AG04449 (cell line): ENCODE measurements at regions of chr7 and their contacts with region 1.

Region 1: GRCh38 chr7:34165929-34166550 is 260.7 kb downstream of the BMPER start:
- DNase-seq: no peak
- H3K4me3 ChIP-seq: no peak overlapping the region
- CTCF ChIP-seq: peak; percentile 65

Region 2: DNA sequence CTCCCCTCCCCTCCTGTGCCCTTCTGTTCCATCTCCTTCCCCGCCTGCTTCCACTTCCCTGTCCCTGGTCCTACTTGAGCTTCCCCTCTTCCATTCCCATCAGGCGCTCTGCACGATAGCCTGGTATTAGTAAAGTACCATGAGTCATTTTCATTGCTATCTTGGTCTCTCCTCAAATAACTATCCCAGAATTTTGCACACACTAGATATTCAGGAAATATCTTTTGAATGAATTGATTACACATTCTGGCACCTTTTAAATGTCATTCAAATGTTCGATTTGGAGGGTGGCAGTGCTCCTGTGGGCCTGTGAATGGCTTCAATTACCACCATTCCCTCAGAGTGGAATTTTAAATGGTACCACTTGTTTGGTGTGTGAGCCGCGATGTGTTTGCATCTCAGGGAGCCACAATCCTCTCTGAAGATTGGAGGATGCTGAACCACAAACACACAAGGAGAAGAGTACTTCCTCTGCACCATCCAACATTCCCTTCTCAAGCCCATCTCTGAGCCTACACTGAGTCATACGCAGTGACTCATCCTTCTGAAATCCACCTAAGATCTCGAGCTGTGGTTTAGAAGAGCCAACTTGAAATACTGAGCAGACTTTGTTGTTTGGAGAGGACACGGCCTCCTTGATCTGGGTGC is 179.0 kb before region 1 on chr7:
- CTCF ChIA-PET with region 1: interaction called, 20 read pairs
- POLR2A ChIA-PET with region 1: no interaction called
- DNase-seq: peak; percentile 96
- H3K4me3 ChIP-seq: no peak overlapping the region
- CTCF ChIP-seq: no peak

Region 3: GRCh38 chr7:34133983-34134782 is 31.9 kb before region 1 on chr7:
- CTCF ChIA-PET with region 1: interaction called, 104 read pairs
- POLR2A ChIA-PET with region 1: no interaction called
- DNase-seq: no peak
- H3K4me3 ChIP-seq: no peak overlapping the region
- CTCF ChIP-seq: peak; percentile 76

Region 4: DNA sequence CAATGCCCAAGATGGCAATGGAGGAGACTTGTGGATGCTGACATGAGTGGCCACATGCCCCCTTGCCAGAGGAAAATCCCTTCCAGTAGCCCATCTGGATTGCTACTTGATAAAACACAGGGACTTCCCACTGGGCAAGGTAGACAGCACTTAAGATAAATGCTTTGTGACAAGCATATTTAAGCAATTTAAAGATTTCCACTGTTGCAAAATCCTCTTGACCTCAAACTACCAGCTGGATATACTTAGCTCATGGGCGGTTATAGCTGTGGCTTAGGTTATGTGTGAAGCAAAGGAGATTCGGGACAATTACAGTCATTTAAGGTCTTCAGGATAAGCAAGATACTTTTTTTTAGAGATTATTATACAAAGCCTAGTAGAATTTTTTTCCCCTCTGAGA is 22.6 kb before region 1 on chr7:
- CTCF ChIA-PET with region 1: interaction called, 13 read pairs
- POLR2A ChIA-PET with region 1: no interaction called
- DNase-seq: peak; percentile 75
- H3K4me3 ChIP-seq: no peak overlapping the region
- CTCF ChIP-seq: no peak

Region 5: DNA sequence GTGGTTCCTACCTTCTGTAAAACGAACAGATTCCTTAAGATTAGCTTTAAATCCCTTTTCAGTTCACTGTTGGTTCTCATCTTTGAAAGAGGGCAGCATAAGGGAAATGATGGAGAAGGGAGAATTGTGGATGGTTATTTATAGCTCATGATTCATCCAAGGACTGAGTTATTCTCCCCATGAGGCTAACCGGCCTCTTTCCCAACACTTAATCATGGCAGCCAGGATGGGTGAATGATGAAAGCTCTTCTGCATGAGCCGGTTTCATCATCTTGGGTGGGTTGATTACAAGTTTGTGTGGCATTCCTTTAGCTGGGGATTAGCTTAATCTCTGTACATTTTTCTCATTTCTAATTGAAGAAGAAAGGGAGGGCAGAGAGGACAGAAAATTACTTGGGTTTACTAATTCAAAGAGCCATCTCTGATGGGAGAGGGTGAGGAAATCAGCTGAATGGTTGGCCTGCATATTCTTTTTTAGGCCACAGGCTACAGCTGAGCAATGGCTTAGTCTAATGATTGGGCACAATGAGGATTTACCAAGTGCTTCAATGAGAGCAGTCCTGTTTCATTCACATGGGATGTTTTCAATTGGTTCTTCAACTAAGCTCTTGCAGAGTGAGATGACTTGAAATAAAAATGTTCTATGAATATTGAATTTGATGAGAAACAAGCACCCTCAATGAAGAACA is 10.7 kb before region 1 on chr7:
- CTCF ChIA-PET with region 1: interaction called, 28 read pairs
- POLR2A ChIA-PET with region 1: no interaction called
- DNase-seq: peak; percentile 98
- H3K4me3 ChIP-seq: no peak overlapping the region
- CTCF ChIP-seq: no peak

Region 6: GRCh38 chr7:34277016-34277802 is 111.2 kb after region 1 on chr7:
- CTCF ChIA-PET with region 1: no interaction called
- POLR2A ChIA-PET with region 1: no interaction called
- DNase-seq: no peak
- H3K4me3 ChIP-seq: no peak overlapping the region
- CTCF ChIP-seq: no peak